ENCODE measurements at regions of chr6 and their contacts with region 1.

Region 1: DNA sequence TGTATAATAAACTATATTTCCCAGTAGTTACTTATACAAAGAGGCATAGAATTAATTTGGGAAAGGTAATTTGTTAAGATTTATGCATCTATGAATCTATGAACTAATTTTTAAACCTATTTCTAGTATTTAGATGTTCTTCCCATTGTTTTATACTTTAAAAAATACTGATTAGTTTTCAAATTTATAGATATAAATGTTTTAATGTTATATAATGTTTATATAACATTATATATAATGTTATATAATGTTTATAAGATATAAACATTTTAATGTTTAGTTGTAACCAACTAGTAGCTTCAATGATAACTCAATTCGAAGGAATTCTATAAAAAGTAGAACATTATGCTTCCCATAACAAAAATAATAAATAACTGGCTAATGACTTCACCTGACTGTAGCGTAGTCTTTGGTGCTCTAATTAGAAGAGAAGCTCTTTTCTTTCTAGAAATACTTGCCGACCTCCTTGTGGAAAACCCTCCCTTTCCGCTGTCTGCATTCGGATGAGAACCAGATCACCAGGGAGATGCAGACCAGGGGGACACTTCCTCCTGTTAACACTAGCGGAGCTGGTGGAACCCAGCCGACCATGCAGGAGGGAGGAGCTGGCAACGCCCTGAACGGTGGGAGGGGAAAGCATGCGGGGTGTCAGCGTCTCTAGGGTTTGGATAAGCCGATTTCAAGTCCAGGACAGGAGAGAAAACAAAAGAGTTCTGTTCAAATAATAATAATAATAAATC is 158.4 kb downstream of the OR2B2 start:
- DNase-seq: peak; percentile 72
- ATAC-seq: peak; percentile 84
- H3K4me3 ChIP-seq: peak overlapping the region; percentile 58
- H3K27ac ChIP-seq: peak overlapping the region; percentile 48
- H3K4me1 ChIP-seq: peaks cover 9% of the 10 kb centered on the region; the same call in 1 of the 2 replicates
- H3K27me3 ChIP-seq: no peaks in the 10 kb centered on the region
- CTCF ChIP-seq: peak in 2 of 3 experiments; percentile 5 to 15; a peak in 2 of 6 replicates
- EP300 ChIP-seq: no peak
- POLR2A ChIP-seq: peak; percentile 52; the same call in 1 of the 2 replicates
- RAD21 ChIP-seq: no peak

Region 2: GRCh38 chr6:27157459-27158315 is 596.2 kb before region 1 on chr6:
- CTCF ChIA-PET with region 1: no interaction called
- POLR2A ChIA-PET with region 1: no interaction called
- RAD21 ChIA-PET with region 1: interaction called, 4 read pairs
- SMC1A ChIA-PET with region 1: interaction called, 4 read pairs
- in situ Hi-C with region 1: no loop called
- intact Hi-C with region 1: loop called (anchors 5 kb)
- DNase-seq: peak; percentile 66
- ATAC-seq: peak; percentile 83
- H3K4me3 ChIP-seq: peak overlapping the region; percentile 70
- H3K27ac ChIP-seq: peak overlapping the region; percentile 45
- H3K4me1 ChIP-seq: peaks cover 8% of the 10 kb centered on the region
- H3K27me3 ChIP-seq: no peaks in the 10 kb centered on the region
- CTCF ChIP-seq: peak in 2 of 3 experiments; percentile 56 to 63; a peak in 5 of 6 replicates
- EP300 ChIP-seq: peak in 1 of 2 experiments; percentile 74; a peak in 1 of 4 replicates
- POLR2A ChIP-seq: no peak
- RAD21 ChIP-seq: peak; percentile 43

Region 3: DNA sequence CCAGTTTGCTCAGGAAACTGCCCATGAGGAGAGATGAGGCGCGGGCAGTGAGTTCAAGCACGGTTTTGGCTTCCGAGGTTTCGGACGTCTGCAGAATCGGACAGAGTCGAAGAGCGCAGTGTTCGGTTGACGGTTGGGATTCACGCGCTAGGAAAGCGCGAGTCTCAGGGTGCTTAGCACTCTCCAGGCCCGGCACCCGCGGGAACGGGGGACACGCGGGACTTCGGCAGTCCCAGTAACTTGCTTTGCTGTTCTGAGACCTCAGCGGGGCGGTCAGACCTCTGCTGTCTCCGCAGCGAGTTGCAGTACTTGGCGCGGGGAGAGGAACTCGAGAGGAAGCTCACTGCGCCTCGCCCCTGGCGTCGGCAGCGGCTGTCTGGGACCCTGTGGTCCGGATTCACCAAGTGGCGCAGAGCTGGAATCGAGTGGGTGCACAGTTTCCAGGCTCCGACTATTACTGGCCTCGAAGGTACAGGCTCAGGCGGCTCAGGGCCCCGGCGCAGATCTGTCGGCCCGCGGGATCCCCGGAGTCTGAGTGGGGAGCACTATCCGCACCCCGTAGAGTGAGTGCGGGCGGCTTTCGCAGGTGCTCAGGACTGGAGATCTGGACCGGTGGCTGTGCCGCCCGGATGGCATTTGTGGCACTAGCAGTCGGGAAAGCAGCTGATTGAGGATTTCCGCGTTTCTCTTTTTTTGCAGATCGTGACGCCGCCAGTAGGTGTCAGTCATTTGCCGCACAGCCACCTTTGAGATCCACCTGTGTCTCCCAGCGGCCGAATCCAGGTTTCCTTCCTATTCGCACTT is 441.5 kb before region 1 on chr6 and contains the start of gene POM121L2:
- CTCF ChIA-PET with region 1: interaction called, 15 read pairs
- POLR2A ChIA-PET with region 1: no interaction called
- RAD21 ChIA-PET with region 1: interaction called, 7 read pairs
- SMC1A ChIA-PET with region 1: interaction called, 9 read pairs
- in situ Hi-C with region 1: no loop called
- intact Hi-C with region 1: loop called (anchors 5 kb)
- DNase-seq: no peak
- ATAC-seq: peak; percentile 89
- H3K4me3 ChIP-seq: peak within 1 kb of the TSS; percentile 82
- H3K27ac ChIP-seq: no peak within 1 kb of the TSS
- H3K4me1 ChIP-seq: 0 out of 2 replicates have a peak, but pooled peaks cover 5% of the 10 kb centered on the region
- H3K27me3 ChIP-seq: no peaks in the 10 kb centered on the region; a peak in 2 of 4 replicates
- CTCF ChIP-seq: peak; percentile 74 to 85 (median 77)
- EP300 ChIP-seq: no peak
- POLR2A ChIP-seq: peak; percentile 45
- RAD21 ChIP-seq: peak; percentile 81
- polyA plus RNA-seq, gene POM121L2: not detected

Region 4: GRCh38 chr6:27518881-27519795 is 234.7 kb before region 1 on chr6:
- CTCF ChIA-PET with region 1: interaction called, 29 read pairs
- POLR2A ChIA-PET with region 1: interaction called, 4 read pairs
- RAD21 ChIA-PET with region 1: interaction called, 23 read pairs
- SMC1A ChIA-PET with region 1: interaction called, 21 read pairs
- in situ Hi-C with region 1: loop called (anchors 25 kb)
- intact Hi-C with region 1: loop called (anchors 1 kb)
- DNase-seq: peak; percentile 83
- ATAC-seq: peak; percentile 92
- H3K4me3 ChIP-seq: peak overlapping the region; percentile 83
- H3K27ac ChIP-seq: peak overlapping the region; percentile 67
- H3K4me1 ChIP-seq: no peaks in the 10 kb centered on the region
- H3K27me3 ChIP-seq: 0 out of 4 replicates have a peak, but pooled peaks cover 0 to 5% of the 10 kb centered on the region in 2 experiments
- CTCF ChIP-seq: peak; percentile 61 to 72 (median 69)
- EP300 ChIP-seq: peak in 1 of 2 experiments; percentile 15; a peak in 1 of 4 replicates
- POLR2A ChIP-seq: no peak
- RAD21 ChIP-seq: peak; percentile 68

Region 5: GRCh38 chr6:27736686-27737085 is 17.2 kb before region 1 on chr6:
- CTCF ChIA-PET with region 1: interaction called, 12 read pairs
- POLR2A ChIA-PET with region 1: interaction called, 6 read pairs
- RAD21 ChIA-PET with region 1: interaction called, 12 read pairs
- SMC1A ChIA-PET with region 1: interaction called, 13 read pairs
- in situ Hi-C with region 1: no loop called
- intact Hi-C with region 1: no loop called
- DNase-seq: no peak
- ATAC-seq: no peak
- H3K4me3 ChIP-seq: no peak overlapping the region
- H3K27ac ChIP-seq: no peak overlapping the region
- H3K4me1 ChIP-seq: no peaks in the 10 kb centered on the region
- H3K27me3 ChIP-seq: no peaks in the 10 kb centered on the region
- CTCF ChIP-seq: no peak
- EP300 ChIP-seq: no peak
- POLR2A ChIP-seq: no peak
- RAD21 ChIP-seq: no peak

Region 6: GRCh38 chr6:27777614-27778355 is 23.9 kb after region 1 on chr6:
- CTCF ChIA-PET with region 1: interaction called, 193 read pairs
- POLR2A ChIA-PET with region 1: interaction called, 29 read pairs
- RAD21 ChIA-PET with region 1: interaction called, 43 read pairs
- SMC1A ChIA-PET with region 1: interaction called, 93 read pairs
- in situ Hi-C with region 1: no loop called
- intact Hi-C with region 1: no loop called
- DNase-seq: no peak
- ATAC-seq: no peak
- H3K4me3 ChIP-seq: peak overlapping the region; percentile 49
- H3K27ac ChIP-seq: peak overlapping the region; percentile 86
- H3K4me1 ChIP-seq: peaks cover 17% of the 10 kb centered on the region
- H3K27me3 ChIP-seq: no peaks in the 10 kb centered on the region
- CTCF ChIP-seq: no peak
- EP300 ChIP-seq: no peak
- POLR2A ChIP-seq: no peak
- RAD21 ChIP-seq: no peak

Measured in GM12878 (cell line).